Sigmoid colon (tissue), 7 donors: ENCODE measurements at regions of chr7 and their contacts with region 1.

Region 1: DNA sequence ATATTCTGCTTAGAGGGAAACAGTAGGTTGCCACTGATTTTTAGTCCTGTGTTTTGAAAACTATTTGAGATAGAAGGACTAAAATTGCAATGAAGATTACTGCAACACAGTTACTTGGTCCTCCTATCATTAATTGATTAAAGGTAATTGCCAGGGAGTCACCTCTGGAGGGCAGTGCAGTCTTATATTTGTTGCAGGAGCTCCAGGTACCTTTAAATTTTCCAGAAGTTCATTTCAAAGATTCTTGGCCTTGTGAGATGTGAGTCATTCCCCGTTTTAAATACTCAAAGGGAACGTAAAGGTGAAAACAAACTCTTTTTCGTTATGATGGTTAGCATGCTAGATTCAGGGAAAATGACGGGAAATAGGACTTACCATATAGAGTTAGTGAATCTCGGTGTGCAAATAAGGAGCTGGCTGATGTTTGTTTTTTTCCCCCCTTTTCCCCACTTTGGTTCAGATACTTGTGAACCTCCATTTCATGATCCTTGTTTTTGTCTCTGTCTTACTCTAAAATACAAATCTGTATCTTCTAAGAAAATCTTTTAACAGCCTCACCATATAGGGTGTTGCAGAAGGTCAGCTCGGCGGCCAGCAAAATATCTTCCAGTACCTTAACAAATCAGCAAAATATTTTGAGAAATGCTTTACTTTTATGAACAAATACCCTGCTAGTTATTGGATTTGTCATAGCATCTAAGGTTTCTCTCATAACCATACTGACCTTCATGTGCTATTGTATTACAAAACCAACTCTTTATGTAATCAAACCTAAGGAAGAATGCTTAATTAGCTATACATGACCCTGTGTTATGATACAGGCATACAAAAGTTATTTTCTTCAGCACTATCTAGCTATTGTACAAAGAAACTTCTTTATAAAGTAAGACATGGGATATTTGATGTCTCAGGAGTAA is 143.0 kb upstream of the HDAC9 start:
- DNase-seq: no peak
- H3K4me3 ChIP-seq: peak overlapping the region in 1 of 4 donors; percentile 6
- H3K27ac ChIP-seq: no peak overlapping the region
- H3K4me1 ChIP-seq: peaks cover 0 to 21% (median 19%) of the 10 kb centered on the region in 4 donors
- H3K27me3 ChIP-seq: no peaks in the 10 kb centered on the region
- CTCF ChIP-seq: peak in 3 of 4 experiments; percentile 28 to 37 (median 36)
- EP300 ChIP-seq: no peak
- POLR2A ChIP-seq: no peak

Region 2: GRCh38 chr7:18313965-18314364 is 38.6 kb before region 1 on chr7:
- intact Hi-C with region 1: no loop called
- DNase-seq: no peak
- H3K4me3 ChIP-seq: no peak overlapping the region
- H3K27ac ChIP-seq: no peak overlapping the region
- H3K4me1 ChIP-seq: peaks cover 0 to 26% (median 12%) of the 10 kb centered on the region in 4 donors
- H3K27me3 ChIP-seq: no peaks in the 10 kb centered on the region
- CTCF ChIP-seq: no peak
- EP300 ChIP-seq: no peak
- POLR2A ChIP-seq: no peak

Region 3: GRCh38 chr7:18437101-18437500 is 84.5 kb after region 1 on chr7:
- intact Hi-C with region 1: no loop called
- DNase-seq: no peak
- H3K4me3 ChIP-seq: no peak overlapping the region
- H3K27ac ChIP-seq: no peak overlapping the region
- H3K4me1 ChIP-seq: no peaks in the 10 kb centered on the region
- H3K27me3 ChIP-seq: no peaks in the 10 kb centered on the region
- CTCF ChIP-seq: no peak
- EP300 ChIP-seq: no peak
- POLR2A ChIP-seq: no peak

Region 4: GRCh38 chr7:18570890-18571478 is 218.4 kb after region 1 on chr7:
- intact Hi-C with region 1: loop called (anchors 5 kb)
- DNase-seq: no peak
- H3K4me3 ChIP-seq: no peak overlapping the region
- H3K27ac ChIP-seq: no peak overlapping the region
- H3K4me1 ChIP-seq: no peaks in the 10 kb centered on the region
- H3K27me3 ChIP-seq: no peaks in the 10 kb centered on the region
- CTCF ChIP-seq: peak in 2 of 4 experiments; percentile 13 to 18
- EP300 ChIP-seq: no peak
- POLR2A ChIP-seq: no peak

Region 5: GRCh38 chr7:18666107-18666728 is 313.6 kb after region 1 on chr7:
- intact Hi-C with region 1: loop called (anchors 5 kb)
- DNase-seq: peak; percentile 87
- H3K4me3 ChIP-seq: no peak overlapping the region
- H3K27ac ChIP-seq: no peak overlapping the region
- H3K4me1 ChIP-seq: peaks cover 0 to 9% (median 0%) of the 10 kb centered on the region in 4 donors
- H3K27me3 ChIP-seq: no peaks in the 10 kb centered on the region
- CTCF ChIP-seq: peak; percentile 39 to 87 (median 66)
- EP300 ChIP-seq: no peak
- POLR2A ChIP-seq: no peak

Region 6: GRCh38 chr7:19665399-19666008 is 1312.9 kb after region 1 on chr7:
- intact Hi-C with region 1: loop called (anchors 5 kb)
- DNase-seq: no peak
- H3K4me3 ChIP-seq: no peak overlapping the region
- H3K27ac ChIP-seq: no peak overlapping the region
- H3K4me1 ChIP-seq: no peaks in the 10 kb centered on the region
- H3K27me3 ChIP-seq: no peaks in the 10 kb centered on the region
- CTCF ChIP-seq: peak in 3 of 4 experiments; percentile 30 to 54 (median 31)
- EP300 ChIP-seq: no peak
- POLR2A ChIP-seq: no peak